Right lobe of liver (tissue), 6 donors: ENCODE measurements at regions of chr5 and their contacts with region 1.

Region 1: DNA sequence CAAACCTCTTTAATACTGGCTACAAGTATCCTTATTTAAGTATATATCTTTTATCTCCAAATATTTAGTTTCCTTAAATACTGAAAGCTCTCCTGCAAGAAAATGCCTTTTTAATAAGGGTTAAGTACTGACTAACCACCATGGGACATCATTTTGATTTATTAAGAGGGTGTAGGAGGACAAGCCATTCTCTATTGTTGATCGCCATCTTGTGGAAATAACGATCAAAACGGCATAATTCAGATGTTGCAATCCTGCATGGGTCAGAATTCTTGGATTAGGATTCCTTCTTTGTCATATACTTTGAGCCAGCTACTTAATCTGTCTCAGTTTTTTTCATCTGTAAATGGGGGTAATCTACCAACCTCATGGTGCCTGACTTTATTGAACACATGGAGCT is 28.7 kb upstream of the C5orf46 start:
- DNase-seq: no peak
- ATAC-seq: peak; percentile 90 to 94 (median 92)
- H3K4me3 ChIP-seq: no peak overlapping the region
- H3K27ac ChIP-seq: no peak overlapping the region
- H3K4me1 ChIP-seq: no peaks in the 10 kb centered on the region
- H3K27me3 ChIP-seq: no peaks in the 10 kb centered on the region
- CTCF ChIP-seq: peak; percentile 40 to 82 (median 65)
- POLR2A ChIP-seq: no peak

Region 2: GRCh38 chr5:147887024-147887627 is 47.9 kb before region 1 on chr5:
- intact Hi-C with region 1: loop called (anchors 5 to 10 kb)
- DNase-seq: no peak
- ATAC-seq: peak; percentile 57 to 71 (median 65)
- H3K4me3 ChIP-seq: no peak overlapping the region
- H3K27ac ChIP-seq: no peak overlapping the region
- H3K4me1 ChIP-seq: no peaks in the 10 kb centered on the region
- H3K27me3 ChIP-seq: no peaks in the 10 kb centered on the region
- CTCF ChIP-seq: peak; percentile 66 to 75 (median 72)
- POLR2A ChIP-seq: no peak